ENCODE measurements at regions of chr1 and their contacts with region 1.

Region 1: GRCh38 chr1:95233737-95234500 is at the start of gene RWDD3:
- DNase-seq: peak; percentile 88 to 95 (median 95)
- H3K4me3 ChIP-seq: peak within 1 kb of the TSS; percentile 57 to 84 (median 79)
- H3K27ac ChIP-seq: peak within 1 kb of the TSS in 1 of 2 experiments; percentile 77
- H3K4me1 ChIP-seq: peaks cover 0 to 16% (median 5%) of the 10 kb centered on the region in 4 experiments
- H3K27me3 ChIP-seq: peaks cover 0 to 3% (median 0%) of the 10 kb centered on the region in 5 experiments

Region 2: DNA sequence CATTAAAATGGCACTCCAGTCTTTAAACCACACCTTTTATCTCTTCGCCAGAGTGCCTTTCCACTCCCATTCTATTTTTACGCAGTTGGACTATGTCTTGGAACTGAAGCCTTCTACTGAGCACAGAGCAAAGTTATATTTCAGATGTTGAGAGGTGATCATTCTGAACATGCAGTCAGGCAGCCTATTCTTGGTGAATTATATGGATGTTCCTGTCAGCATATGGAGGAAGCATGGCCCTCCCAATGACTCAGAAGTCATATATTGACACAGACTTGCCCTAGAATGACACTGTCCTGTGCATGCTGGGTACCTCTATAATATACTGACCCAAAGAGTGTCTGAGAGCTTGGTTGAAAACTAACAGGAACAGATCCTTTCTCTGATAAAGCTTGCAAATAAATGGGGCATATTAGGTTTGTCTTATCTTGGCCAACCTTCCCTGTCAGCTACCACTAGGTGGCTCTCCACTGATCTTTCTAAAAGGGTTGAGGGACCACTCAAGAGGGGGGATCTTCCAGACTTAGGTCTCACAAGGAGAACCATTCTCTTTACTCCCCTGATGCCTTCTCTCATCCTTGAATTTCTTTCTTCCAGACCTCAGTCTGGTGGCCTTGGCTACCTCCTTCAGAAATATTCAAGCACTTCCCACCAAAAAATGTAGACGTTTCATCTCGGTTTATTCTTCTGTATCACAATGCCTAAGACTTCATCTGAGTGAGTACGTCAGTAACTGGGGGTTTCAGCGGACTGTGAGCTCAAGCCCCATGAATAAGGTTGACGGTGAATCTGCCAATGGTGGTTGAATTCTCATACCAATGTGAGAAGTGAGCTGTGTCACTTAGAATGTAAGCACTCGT is 149.4 kb before region 1 on chr1:
- CTCF ChIA-PET with region 1: interaction called, 14 read pairs
- POLR2A ChIA-PET with region 1: no interaction called
- DNase-seq: peak; percentile 47 to 65 (median 61)
- H3K4me3 ChIP-seq: no peak overlapping the region
- H3K27ac ChIP-seq: no peak overlapping the region
- H3K4me1 ChIP-seq: no peaks in the 10 kb centered on the region
- H3K27me3 ChIP-seq: peaks cover 0 to 4% (median 0%) of the 10 kb centered on the region in 5 experiments

Region 3: DNA sequence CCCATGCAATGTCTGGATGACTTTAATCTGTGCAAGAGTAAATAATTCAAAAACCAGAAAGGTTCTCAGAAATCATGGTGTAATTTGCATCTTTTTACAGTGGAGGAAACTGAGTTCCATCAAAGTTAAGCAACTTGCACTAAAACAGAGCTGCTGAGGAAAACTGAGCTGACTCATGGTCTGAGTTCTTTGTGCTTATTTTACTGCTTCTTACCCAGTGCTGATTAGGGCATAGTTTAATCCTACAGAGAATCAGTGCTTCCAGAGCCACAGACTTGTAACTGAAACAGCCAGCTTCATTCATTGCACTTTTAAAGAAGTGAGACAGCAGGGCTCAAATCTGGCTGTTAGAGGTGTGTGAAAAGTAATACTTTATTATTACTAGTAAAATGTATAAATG is 10.8 kb before region 1 on chr1:
- CTCF ChIA-PET with region 1: interaction called, 12 read pairs
- POLR2A ChIA-PET with region 1: no interaction called
- DNase-seq: no peak
- H3K4me3 ChIP-seq: no peak overlapping the region
- H3K27ac ChIP-seq: no peak overlapping the region
- H3K4me1 ChIP-seq: no peaks in the 10 kb centered on the region
- H3K27me3 ChIP-seq: peaks cover 0 to 2% (median 0%) of the 10 kb centered on the region in 5 experiments

Region 4: DNA sequence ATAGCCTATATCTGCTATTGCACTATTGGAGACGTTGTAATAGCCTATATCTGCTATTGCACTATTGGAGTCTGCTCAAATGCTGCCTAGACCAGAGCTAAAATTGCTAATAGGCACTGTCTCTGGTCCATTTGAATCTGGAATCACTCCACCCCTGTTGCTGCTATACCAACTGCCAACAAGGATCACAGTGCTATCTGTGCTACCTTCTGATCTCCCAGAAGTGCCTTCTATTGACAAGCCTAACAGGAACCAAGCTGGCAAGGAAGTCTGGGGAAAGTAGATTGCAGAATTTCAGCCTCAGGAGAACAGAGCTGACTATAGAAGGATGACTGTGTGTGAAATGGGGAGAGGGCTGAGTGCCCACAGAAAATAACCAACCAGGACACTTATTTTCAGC is 16.0 kb after region 1 on chr1:
- CTCF ChIA-PET with region 1: interaction called, 12 read pairs
- POLR2A ChIA-PET with region 1: interaction called, 5 read pairs
- DNase-seq: peak; percentile 74 to 96 (median 90)
- H3K4me3 ChIP-seq: peak overlapping the region in 1 of 7 experiments; percentile 23
- H3K27ac ChIP-seq: no peak overlapping the region
- H3K4me1 ChIP-seq: peaks cover 11 to 42% (median 22%) of the 10 kb centered on the region in 4 experiments
- H3K27me3 ChIP-seq: peaks cover 0 to 3% (median 0%) of the 10 kb centered on the region in 5 experiments